Transverse colon (tissue), 4 donors: ENCODE measurements at regions of chr2 and their contacts with region 1.

Region 1: GRCh38 chr2:69299772-69300516 is 87.1 kb downstream of the GFPT1 start:
- DNase-seq: no peak
- H3K4me3 ChIP-seq: no peak overlapping the region
- H3K27ac ChIP-seq: no peak overlapping the region
- H3K4me1 ChIP-seq: no peaks in the 10 kb centered on the region
- H3K27me3 ChIP-seq: no peaks in the 10 kb centered on the region
- CTCF ChIP-seq: no peak
- EP300 ChIP-seq: no peak
- POLR2A ChIP-seq: no peak

Region 2: DNA sequence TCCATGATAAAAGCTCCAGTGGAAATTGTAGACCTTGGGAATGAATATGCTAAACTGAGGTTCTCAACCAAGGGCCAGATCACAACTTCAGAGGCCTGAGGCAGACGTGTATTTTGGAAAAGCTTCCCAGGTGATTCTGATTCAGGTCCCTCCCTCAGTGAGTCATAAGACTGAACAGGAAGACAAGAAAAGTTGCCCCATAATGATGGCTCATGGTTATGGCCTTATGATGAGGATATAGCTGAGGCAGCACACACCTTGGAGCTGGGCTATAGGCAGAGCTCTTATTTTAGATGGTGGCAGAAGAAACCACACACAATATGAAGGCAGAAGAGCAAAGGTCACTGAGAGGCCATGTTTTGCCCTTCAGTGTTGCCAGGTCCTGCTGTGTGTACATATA is 277.4 kb before region 1 on chr2:
- in situ Hi-C with region 1: loop called in 3 of 4 experiments (anchors 5 to 10 kb)
- intact Hi-C with region 1: no loop called
- DNase-seq: no peak
- H3K4me3 ChIP-seq: no peak overlapping the region
- H3K27ac ChIP-seq: no peak overlapping the region
- H3K4me1 ChIP-seq: peaks cover 11 to 29% (median 15%) of the 10 kb centered on the region in 4 donors
- H3K27me3 ChIP-seq: no peaks in the 10 kb centered on the region
- CTCF ChIP-seq: no peak
- EP300 ChIP-seq: no peak
- POLR2A ChIP-seq: no peak

Region 3: GRCh38 chr2:69082430-69082997 is 217.4 kb before region 1 on chr2:
- in situ Hi-C with region 1: no loop called
- intact Hi-C with region 1: no loop called
- DNase-seq: peak; percentile 55
- H3K4me3 ChIP-seq: no peak overlapping the region
- H3K27ac ChIP-seq: peak overlapping the region; percentile 51 to 79 (median 61)
- H3K4me1 ChIP-seq: peaks cover 0 to 20% (median 14%) of the 10 kb centered on the region in 4 donors
- H3K27me3 ChIP-seq: no peaks in the 10 kb centered on the region
- CTCF ChIP-seq: no peak
- EP300 ChIP-seq: no peak
- POLR2A ChIP-seq: no peak

Region 4: GRCh38 chr2:70190418-70191243 is 890.7 kb after region 1 on chr2 and contains the start of gene C2orf42:
- in situ Hi-C with region 1: no loop called
- intact Hi-C with region 1: no loop called
- DNase-seq: peak; percentile 96
- H3K4me3 ChIP-seq: peak within 1 kb of the TSS; percentile 57 to 77 (median 65)
- H3K27ac ChIP-seq: peak within 1 kb of the TSS; percentile 91 to 97 (median 95)
- H3K4me1 ChIP-seq: peaks cover 0 to 12% (median 4%) of the 10 kb centered on the region in 4 donors
- H3K27me3 ChIP-seq: no peaks in the 10 kb centered on the region
- CTCF ChIP-seq: peak in 1 of 5 experiments; percentile 9
- EP300 ChIP-seq: no peak
- POLR2A ChIP-seq: peak; percentile 98
- total RNA-seq, gene C2orf42: 2.2 to 14.0 (median 11.1) TPM